Prostate gland (tissue), 2 donors: ENCODE measurements at regions of chr20 and their contacts with region 1.

Region 1: GRCh38 chr20:17682103-17682888 is at the start of gene RRBP1:
- DNase-seq: peak; percentile 98
- H3K4me3 ChIP-seq: peak within 1 kb of the TSS; percentile 85 to 88
- H3K27ac ChIP-seq: peak within 1 kb of the TSS; percentile 86 to 91
- H3K4me1 ChIP-seq: peaks cover 2% of the 10 kb centered on the region
- H3K27me3 ChIP-seq: no peaks in the 10 kb centered on the region
- CTCF ChIP-seq: peak in 2 of 4 experiments; percentile 46 to 57
- POLR2A ChIP-seq: peak; percentile 98
- total RNA-seq, gene RRBP1: 112 to 148 TPM

Region 2: DNA sequence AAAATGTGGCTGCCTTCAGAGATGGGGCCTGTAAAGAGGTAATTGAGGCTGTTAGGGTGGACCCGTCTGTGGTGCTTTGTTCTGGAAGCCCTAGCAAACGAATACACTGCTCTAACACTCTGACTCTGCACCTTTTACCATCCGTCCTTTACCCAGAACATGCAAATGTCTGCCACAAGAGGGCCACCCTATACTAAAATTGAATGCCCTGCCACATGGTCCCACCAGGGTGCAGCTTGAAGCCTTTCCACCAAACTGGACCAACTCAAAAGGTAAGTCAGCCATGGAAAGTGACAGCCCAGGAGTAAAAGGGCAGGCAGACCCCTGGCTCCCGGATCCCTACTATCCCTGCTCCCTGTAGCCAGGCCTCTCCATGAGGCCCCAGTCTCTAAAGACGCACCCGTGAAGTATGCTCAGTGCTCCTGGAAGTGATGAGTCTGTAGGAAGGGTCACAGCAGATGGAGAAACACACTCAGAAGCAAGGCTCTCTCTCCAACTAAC is 145.3 kb before region 1 on chr20:
- intact Hi-C with region 1: loop called (anchors 10 kb)
- DNase-seq: peak; percentile 75
- H3K4me3 ChIP-seq: no peak overlapping the region
- H3K27ac ChIP-seq: no peak overlapping the region
- H3K4me1 ChIP-seq: no peaks in the 10 kb centered on the region
- H3K27me3 ChIP-seq: no peaks in the 10 kb centered on the region
- CTCF ChIP-seq: peak; percentile 74 to 97 (median 93)
- POLR2A ChIP-seq: no peak

Region 3: DNA sequence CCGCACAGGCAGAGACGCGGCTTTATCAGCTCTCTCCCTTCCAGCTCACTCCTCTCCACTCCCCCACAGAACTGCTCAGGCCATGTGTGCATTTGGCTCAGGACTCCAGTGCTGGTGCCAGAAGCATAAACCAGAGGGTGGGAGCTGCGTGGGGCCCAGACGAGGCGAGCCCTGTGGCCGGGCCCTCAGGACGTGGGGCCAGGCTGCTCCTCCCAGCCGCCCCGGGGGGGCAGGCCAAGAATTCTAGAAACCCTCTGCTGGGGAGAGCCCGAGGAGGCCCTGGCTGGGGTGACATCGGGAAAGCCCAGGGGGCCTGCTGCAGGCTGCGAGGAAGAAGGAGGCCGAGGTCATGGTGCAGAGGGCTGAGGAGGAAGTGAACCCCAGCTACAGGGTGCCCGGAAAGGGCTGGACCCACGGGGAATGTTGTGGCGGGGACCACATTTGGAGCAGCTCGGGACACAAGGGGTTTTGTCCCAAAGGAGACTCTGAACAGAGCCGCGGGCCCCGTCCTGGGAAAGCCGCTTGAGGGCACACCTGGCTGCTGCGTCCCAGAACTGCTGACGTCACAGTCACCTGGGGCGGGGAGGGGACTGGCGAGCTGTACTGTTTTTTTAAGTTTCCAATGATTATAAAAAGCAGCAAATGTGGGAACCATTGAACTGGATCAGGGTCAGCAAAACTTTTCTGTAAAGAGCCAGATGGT is 124.6 kb after region 1 on chr20:
- intact Hi-C with region 1: loop called (anchors 10 kb)
- DNase-seq: no peak
- H3K4me3 ChIP-seq: no peak overlapping the region
- H3K27ac ChIP-seq: peak overlapping the region; percentile 42 to 52
- H3K4me1 ChIP-seq: peaks cover 6% of the 10 kb centered on the region
- H3K27me3 ChIP-seq: no peaks in the 10 kb centered on the region
- CTCF ChIP-seq: no peak
- POLR2A ChIP-seq: no peak

Region 4: DNA sequence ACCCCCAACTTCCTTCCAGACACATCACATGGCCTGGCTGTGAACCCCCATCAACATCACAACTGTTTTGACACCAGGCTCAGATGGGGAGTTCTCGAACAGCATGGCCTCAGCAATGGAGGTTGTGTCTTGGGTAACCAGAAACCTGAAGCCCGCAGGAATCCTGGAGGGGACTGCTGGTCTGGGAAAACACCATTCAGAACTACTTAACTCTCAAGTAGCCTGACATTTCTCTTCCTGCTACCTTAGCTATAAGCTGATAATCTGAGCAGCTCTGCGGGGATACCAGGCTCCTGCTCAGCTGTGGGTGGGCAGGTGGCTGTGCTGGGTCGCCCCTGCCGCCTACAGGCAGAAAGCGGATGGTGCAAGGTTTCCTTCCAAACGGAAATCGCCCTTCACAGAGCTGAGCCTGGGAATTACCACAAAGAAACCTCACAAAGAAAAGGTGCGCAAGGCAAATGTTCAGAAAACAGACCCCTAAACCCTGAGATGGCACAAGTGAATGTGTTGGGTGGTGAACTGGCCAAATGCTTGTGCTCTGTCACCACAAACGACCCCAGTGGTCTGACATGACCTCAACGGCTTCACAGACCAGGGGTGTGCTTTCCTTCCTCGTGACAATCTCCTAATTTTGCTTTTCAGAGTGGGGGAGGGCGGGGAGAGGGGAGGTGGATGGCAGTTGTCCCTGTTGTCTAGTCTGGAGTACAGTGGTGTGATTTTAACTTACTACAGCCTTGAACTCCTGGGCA is 256.7 kb after region 1 on chr20:
- intact Hi-C with region 1: loop called (anchors 2 kb)
- DNase-seq: peak; percentile 55
- H3K4me3 ChIP-seq: no peak overlapping the region
- H3K27ac ChIP-seq: no peak overlapping the region
- H3K4me1 ChIP-seq: no peaks in the 10 kb centered on the region
- H3K27me3 ChIP-seq: no peaks in the 10 kb centered on the region
- CTCF ChIP-seq: peak; percentile 49 to 83 (median 74)
- POLR2A ChIP-seq: no peak

Region 5: DNA sequence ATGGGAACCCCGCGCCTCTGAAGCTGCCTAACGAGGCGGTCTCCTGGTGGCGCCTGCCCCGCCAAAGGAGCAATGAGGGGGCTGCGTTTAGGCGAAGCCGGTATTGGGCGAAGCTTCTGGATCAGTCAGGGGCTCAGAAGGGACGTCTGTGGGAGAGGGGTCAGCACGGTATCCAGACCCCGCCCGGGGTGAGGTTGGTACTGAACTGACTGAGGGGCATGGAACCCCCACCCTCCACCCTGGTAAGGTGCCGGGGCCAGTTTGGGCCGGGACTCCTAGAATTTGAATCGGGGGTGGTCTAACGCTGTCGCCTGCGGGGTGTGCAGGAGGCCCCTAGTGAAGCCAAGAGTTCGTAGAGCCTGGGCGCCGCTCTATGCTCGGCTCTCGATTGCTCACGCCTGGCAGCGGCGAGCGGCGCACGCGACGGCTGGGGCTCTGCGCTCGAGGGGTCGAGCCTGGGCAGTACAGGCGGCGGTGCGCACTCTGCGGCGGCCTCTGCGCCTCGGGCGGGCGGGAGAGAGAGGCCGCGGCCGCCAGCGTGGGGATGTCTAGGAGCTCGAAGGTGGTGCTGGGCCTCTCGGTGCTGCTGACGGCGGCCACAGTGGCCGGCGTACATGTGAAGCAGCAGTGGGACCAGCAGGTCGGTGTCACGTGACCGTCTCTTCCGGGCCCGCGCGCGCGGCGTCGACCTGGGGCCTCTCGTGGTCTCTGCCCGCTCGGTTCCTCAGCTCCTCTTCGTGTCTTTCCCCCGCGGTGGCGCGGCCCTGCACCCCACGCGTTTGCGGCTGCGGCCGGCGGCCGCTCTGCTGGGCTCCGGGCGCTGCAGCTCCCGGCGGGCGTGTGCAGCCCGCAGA is 455.3 kb after region 1 on chr20 and contains the starts of genes KAT14 and PET117:
- intact Hi-C with region 1: loop called (anchors 10 kb)
- DNase-seq: peak; percentile 82
- H3K4me3 ChIP-seq: peak within 1 kb of the TSS; percentile 69 to 90
- H3K27ac ChIP-seq: peak within 1 kb of the TSS; percentile 79 to 87
- H3K4me1 ChIP-seq: no peaks in the 10 kb centered on the region
- H3K27me3 ChIP-seq: no peaks in the 10 kb centered on the region
- CTCF ChIP-seq: peak in 2 of 4 experiments; percentile 12 to 32
- POLR2A ChIP-seq: peak; percentile 37
- total RNA-seq, gene KAT14: 15.2 to 23.3 TPM
- total RNA-seq, gene PET117: 17.6 to 19.2 TPM